Left cardiac atrium (tissue), 4 donors: ENCODE measurements at regions of chr2 and their contacts with region 1.

Region 1: DNA sequence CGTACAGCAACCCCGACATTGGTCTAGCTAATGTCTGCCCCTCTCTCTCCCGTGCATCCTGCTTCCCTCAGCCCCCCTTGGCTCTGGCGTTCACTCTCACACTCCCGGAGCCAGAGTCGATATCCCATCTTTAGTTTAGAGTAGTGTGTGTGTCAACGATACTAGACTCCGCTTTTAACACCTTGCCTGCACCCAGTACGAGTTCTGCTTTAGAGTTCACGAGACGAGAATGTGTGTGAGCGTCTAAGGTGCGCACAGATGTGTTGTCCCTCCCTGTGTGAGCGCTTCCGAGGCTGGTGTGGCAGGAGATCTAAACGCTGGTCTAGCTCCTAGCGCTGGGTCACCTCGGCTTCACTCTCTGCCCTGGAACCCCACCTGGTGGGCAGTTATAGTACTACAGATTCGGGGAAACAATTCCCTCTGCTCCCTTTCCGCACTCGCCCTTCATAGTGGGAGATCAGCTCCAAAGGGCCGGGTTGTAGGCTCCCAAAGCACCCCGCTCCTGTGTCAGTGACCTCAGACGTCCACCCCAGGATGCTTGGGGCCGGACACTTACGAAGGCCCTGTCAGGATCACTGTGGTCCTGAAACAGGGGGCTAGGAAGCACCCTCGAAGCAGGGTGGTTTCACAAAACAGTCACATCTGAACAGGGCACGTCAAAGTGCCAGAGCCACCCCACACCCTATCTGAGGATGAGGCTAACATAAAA is 2.6 kb upstream of the CYP26B1 start:
- DNase-seq: peak; percentile 70
- ATAC-seq: peak; percentile 65 to 77

Region 2: GRCh38 chr2:71545572-71546274 is 604.6 kb before region 1 on chr2:
- intact Hi-C with region 1: loop called in 1 of 2 experiments (anchors 2 kb)
- DNase-seq: peak; percentile 56
- ATAC-seq: peak; percentile 68 to 80

Region 3: GRCh38 chr2:71609958-71610357 is 540.4 kb before region 1 on chr2:
- intact Hi-C with region 1: loop called in 1 of 2 experiments (anchors 5 kb)
- DNase-seq: no peak
- ATAC-seq: peak in 1 of 2 donors; percentile 17

Region 4: DNA sequence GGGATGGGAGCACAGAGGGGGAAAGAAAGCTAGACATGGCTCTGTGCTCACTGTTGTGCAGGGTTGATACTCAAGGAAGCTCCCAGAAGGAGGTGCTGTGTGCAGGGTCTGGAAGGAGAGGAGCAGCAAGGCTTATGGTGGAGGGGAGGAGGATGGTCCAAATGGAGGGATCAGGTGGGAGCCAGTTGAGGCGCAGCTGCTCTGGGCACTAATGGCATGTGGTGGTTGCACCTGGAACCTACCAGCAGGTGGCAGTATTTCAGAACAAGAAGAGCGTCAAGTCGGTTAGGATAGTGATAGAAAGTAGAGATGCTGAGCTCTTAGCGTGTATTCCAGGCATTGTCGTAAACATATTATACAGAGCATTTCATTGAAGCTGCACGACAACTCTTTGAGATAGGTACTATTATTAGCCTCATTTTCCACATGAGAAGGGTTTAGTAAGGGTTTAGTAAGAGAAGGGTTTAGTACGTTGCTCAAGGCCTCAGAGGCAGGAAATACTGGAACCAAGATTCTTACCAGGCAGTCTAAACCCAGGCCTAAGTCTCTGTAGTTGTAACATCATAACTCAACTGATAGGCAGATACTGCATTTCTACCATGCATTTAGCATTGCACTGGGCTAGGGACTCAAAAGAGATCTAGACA is 226.3 kb before region 1 on chr2:
- intact Hi-C with region 1: loop called (anchors 2 to 5 kb)
- DNase-seq: peak; percentile 65
- ATAC-seq: peak; percentile 87 to 88

Region 5: GRCh38 chr2:72394671-72395070 is 244.4 kb after region 1 on chr2:
- intact Hi-C with region 1: no loop called
- DNase-seq: no peak
- ATAC-seq: no peak

Region 6: DNA sequence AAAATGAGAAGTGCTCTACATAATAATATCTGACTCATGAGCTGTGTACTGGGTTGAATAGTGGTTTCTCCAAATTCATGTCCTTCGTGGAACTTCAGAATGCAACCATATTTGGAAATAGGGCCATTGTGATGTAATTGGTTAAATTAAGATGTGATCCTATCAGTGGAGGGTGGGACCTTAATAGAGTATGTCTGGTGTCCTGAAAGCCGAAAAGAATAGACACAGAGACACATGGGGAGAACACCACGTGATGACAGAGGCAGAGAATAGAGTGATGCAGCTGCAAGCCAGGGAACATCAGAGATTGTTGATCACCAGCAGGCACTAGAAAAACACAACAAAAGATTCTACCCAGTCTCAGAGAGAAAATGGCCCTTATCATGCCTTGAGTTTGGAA is 365.4 kb after region 1 on chr2:
- intact Hi-C with region 1: no loop called
- DNase-seq: no peak
- ATAC-seq: peak in 1 of 2 donors; percentile 27

Region 7: DNA sequence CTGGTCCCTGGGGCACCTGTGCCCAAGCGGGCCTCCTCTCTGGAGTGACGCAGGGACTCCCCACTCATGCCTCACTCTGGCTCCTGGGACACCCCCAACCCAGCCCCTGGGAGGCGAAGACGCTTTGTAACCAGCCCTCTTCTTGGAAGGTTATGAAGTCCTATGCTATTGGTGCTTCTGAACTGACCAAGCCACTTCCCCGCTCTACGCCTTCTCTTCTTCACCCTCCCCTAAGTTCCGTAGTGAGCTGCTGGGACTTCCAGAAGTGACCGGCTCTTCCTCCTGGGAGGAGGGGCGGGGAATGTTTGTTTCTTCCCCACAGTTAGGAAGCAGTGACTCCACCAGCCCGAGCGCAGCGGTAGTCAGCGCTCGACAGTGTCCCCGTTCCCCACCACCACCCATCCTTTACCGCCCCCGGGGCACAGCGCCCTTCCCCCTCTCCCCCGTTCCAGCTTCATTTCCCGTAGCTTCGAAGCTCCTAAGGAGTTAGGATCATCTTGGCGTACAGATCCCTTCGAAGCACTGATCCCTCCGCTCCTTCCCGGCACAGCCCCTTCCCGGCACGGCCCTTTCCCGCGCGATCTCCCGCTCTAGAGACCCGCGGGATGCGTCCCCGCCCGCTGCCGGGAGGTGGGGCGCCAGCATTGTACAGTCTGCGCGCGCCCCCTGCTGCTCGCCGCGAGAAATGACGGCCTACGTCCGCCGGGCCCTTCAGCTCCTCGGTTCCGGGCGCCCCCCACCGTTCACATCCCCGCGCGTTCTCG is 1026.8 kb after region 1 on chr2:
- intact Hi-C with region 1: no loop called
- DNase-seq: peak; percentile 94
- ATAC-seq: peak; percentile 92 to 93